Stomach (tissue), 19 donors: ENCODE measurements at regions of chr3 and their contacts with region 1.

Region 1: DNA sequence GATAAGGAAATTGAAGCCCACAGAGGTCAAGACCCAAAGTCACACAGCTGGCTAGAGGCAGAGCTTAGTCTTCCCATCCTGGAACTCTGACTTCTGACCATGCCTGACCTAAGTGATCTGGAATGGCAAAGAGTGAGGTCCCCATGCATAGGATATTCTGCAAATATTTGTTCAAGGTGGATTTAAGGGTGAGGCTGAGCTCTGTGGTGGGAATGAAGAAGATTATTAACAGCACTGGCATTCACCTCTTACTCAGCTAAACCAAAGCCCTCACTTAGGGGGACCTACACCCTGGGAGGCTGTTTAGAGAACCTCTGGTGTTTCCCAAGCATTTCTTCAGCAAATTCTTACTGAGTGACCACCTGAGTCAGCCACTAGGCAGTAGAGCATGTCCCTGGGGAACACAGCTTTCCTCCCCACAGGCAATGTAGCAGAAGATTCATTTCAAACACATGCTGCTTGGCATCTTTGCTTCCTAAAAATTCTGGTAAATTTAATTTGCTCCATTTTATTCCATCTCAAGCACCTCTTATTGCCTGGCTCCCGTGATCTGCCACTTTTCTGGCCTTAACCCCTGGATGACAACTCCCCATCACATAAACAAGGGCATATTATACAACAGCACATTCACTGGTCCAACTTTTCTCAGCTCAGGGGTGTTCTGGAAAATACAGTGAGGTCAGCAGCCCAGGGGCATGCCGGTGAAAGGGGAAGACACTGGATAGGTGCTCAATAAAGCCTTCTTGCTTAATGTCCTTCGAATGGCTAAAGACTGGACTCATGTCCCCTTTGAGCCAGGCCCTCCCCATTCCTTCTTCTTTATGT is 176.0 kb downstream of the ABHD5 start:
- DNase-seq: no peak
- H3K4me3 ChIP-seq: no peak overlapping the region
- H3K27ac ChIP-seq: no peak overlapping the region
- H3K4me1 ChIP-seq: peaks cover 0 to 17% (median 9%) of the 10 kb centered on the region in 4 donors
- H3K27me3 ChIP-seq: peaks cover 0 to 5% (median 0%) of the 10 kb centered on the region in 3 donors
- CTCF ChIP-seq: no peak
- EP300 ChIP-seq: no peak
- POLR2A ChIP-seq: no peak

Region 2: DNA sequence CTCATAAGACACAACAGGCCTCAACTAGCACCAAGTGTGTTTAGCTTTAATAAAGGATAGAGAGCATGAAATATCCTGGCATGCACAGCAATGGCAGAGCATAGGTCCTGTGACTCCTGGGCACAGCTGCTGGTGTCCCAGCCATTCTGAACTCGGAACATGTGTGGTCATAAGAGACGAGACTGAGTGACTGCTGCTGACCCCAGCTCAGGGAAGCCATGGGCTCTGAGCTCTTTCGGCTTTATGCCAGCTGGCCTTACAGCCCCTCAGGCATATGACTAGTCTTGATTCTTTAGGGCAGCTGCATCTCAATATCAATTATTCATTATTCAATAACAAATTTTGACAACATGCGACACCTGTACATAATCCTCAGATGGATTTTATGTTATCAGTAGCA is 312.5 kb after region 1 on chr3:
- intact Hi-C with region 1: no loop called
- DNase-seq: no peak
- H3K4me3 ChIP-seq: no peak overlapping the region
- H3K27ac ChIP-seq: no peak overlapping the region
- H3K4me1 ChIP-seq: no peaks in the 10 kb centered on the region
- H3K27me3 ChIP-seq: peaks cover 0 to under 1% (median 0%) of the 10 kb centered on the region in 3 donors
- CTCF ChIP-seq: no peak
- EP300 ChIP-seq: no peak
- POLR2A ChIP-seq: no peak

Region 3: GRCh38 chr3:44208086-44208485 is 341.3 kb after region 1 on chr3:
- intact Hi-C with region 1: loop called (anchors 10 kb)
- DNase-seq: no peak
- H3K4me3 ChIP-seq: no peak overlapping the region
- H3K27ac ChIP-seq: no peak overlapping the region
- H3K4me1 ChIP-seq: no peaks in the 10 kb centered on the region
- H3K27me3 ChIP-seq: peaks cover 0 to under 1% (median 0%) of the 10 kb centered on the region in 3 donors
- CTCF ChIP-seq: no peak
- EP300 ChIP-seq: no peak
- POLR2A ChIP-seq: no peak